A549 (cell line): ENCODE measurements at regions of chr9 and their contacts with region 1.

Region 1: DNA sequence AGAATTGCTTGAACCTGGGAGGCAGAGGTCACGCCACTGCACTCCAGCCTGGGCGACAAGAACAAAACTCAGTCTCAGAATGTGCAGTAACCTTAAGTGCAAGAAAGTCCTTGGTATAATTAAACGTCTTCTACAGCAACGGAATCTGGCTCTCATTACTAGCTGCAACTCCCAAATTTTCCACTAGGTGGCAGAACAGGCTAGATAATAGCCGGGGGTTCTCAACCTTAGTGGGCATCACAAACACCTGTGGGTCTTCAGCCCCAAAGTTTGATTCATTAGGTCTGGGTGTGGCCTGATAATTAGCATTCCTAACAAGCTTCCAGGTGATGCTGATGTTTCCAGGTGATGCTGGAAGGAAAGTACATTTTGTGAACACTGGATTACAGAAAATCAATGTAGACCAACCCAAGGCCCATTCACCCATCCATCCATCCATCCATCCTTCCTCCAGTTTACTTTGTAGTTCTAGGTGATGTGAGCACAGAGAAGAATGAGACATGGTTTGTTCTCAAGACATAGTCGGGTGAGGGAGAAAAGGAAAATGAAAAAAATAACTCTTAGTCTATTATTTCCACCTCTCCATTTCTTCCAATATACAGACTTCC is 37.3 kb downstream of the FBXW2 start:
- DNase-seq: peak; percentile 47 to 68
- ATAC-seq: peak; percentile 83 to 87; a peak in 5 of 6 replicates
- H3K4me3 ChIP-seq: no peak overlapping the region
- H3K27ac ChIP-seq: 0 out of 6 replicates have a peak overlapping the region, but pooled peaks of 1 of the 2 experiments have one; percentile 46
- H3K4me1 ChIP-seq: peaks cover 3% of the 10 kb centered on the region; the same call in 1 of the 3 replicates
- CTCF ChIP-seq: peak; percentile 93
- EP300 ChIP-seq: no peak
- POLR2A ChIP-seq: no peak
- RAD21 ChIP-seq: peak; percentile 92 to 96

Region 2: GRCh38 chr9:120714088-120714845 is 41.7 kb before region 1 on chr9 and contains the start of gene MEGF9:
- CTCF ChIA-PET with region 1: interaction called, 17 read pairs
- POLR2A ChIA-PET with region 1: no interaction called
- DNase-seq: peak; percentile 94 to 97
- ATAC-seq: peak; percentile 87 to 96
- H3K4me3 ChIP-seq: peak within 1 kb of the TSS; percentile 86
- H3K27ac ChIP-seq: peak within 1 kb of the TSS; percentile 95 to 96
- H3K4me1 ChIP-seq: peaks cover 24% of the 10 kb centered on the region
- CTCF ChIP-seq: no peak; the same call in 2 of the 3 replicates
- EP300 ChIP-seq: no peak
- POLR2A ChIP-seq: peak; percentile 59
- RAD21 ChIP-seq: no peak
- polyA plus RNA-seq, gene MEGF9: 25.7 and 32.8 TPM in 2 replicates

Region 3: GRCh38 chr9:120742951-120743416 is 12.9 kb before region 1 on chr9:
- CTCF ChIA-PET with region 1: interaction called, 19 read pairs
- POLR2A ChIA-PET with region 1: no interaction called
- DNase-seq: peak; percentile 71
- ATAC-seq: peak; percentile 86 to 95
- H3K4me3 ChIP-seq: no peak overlapping the region
- H3K27ac ChIP-seq: no peak overlapping the region
- H3K4me1 ChIP-seq: peaks cover 9% of the 10 kb centered on the region; the same call in 1 of the 3 replicates
- CTCF ChIP-seq: peak; percentile 62
- EP300 ChIP-seq: no peak
- POLR2A ChIP-seq: no peak
- RAD21 ChIP-seq: peak; percentile 66 to 81

Region 4: DNA sequence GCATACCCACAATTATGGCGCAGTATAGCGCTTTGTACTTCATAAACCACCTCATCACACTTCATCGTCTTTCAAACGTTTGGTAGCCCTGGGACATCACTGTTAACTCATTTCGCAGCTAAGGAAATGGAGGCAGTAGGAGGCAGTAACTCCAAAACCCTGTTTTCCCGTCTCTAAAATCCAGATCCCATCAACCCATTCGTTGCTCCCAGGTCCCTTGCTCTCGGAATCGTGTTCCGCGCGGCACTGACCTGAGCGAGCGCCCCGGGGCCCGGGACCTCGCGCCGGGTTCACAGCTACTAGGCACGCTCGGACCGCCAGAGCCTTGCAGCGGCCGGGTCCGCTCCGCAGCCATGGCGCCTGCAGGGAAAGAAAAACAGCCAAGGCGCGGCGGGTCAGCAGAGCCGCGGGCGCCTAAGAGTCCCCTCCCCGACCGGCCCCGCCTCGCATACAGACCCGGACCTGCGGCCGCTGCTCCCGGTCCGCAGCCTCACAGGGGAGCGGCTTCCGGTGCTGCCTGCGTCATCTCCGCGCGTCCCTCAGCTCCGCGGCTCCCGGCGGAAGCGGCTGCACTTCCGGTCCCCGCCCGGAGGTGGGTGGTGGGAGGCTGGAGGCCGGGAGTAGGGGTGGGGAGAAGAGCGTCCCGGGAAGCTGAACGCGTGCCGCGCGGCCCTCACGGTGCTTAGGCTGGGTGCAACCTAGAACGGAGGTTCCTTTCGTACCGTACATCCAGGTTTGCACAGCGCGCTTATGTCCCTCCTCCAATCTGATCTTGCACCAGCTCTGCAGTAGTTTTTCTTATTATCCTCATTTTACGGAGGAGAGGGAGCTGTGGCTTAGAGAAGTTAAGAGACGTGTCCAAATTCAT is 37.2 kb after region 1 on chr9 and contains the start of gene FBXW2:
- CTCF ChIA-PET with region 1: interaction called, 14 read pairs
- POLR2A ChIA-PET with region 1: no interaction called
- DNase-seq: peak; percentile 90 to 92
- ATAC-seq: peak; percentile 99
- H3K4me3 ChIP-seq: peak within 1 kb of the TSS; percentile 67
- H3K27ac ChIP-seq: peak within 1 kb of the TSS; percentile 89 to 97
- H3K4me1 ChIP-seq: peaks cover 16% of the 10 kb centered on the region
- CTCF ChIP-seq: no peak
- EP300 ChIP-seq: no peak
- POLR2A ChIP-seq: peak; percentile 96
- RAD21 ChIP-seq: no peak; a peak in 2 of 5 replicates
- polyA plus RNA-seq, gene FBXW2: 56.0 and 60.0 TPM in 2 replicates

Region 5: GRCh38 chr9:120936011-120936763 is 180.3 kb after region 1 on chr9:
- CTCF ChIA-PET with region 1: interaction called, 60 read pairs
- POLR2A ChIA-PET with region 1: no interaction called
- DNase-seq: peak; percentile 89 to 96
- ATAC-seq: peak; percentile 88 to 93
- H3K4me3 ChIP-seq: no peak overlapping the region
- H3K27ac ChIP-seq: peak overlapping the region; percentile 83 to 85
- H3K4me1 ChIP-seq: peaks cover 45% of the 10 kb centered on the region
- CTCF ChIP-seq: peak; percentile 95
- EP300 ChIP-seq: no peak
- POLR2A ChIP-seq: no peak
- RAD21 ChIP-seq: peak; percentile 89

Region 6: GRCh38 chr9:121059998-121060636 is 304.2 kb after region 1 on chr9:
- CTCF ChIA-PET with region 1: interaction called, 11 read pairs
- POLR2A ChIA-PET with region 1: interaction called, 3 read pairs
- DNase-seq: peak; percentile 71 to 81
- ATAC-seq: peak; percentile 74 to 75; a peak in 3 of 6 replicates
- H3K4me3 ChIP-seq: no peak overlapping the region
- H3K27ac ChIP-seq: peak overlapping the region; percentile 40 to 57; a peak in 5 of 6 replicates
- H3K4me1 ChIP-seq: peaks cover 33% of the 10 kb centered on the region
- CTCF ChIP-seq: peak; percentile 90
- EP300 ChIP-seq: no peak
- POLR2A ChIP-seq: no peak
- RAD21 ChIP-seq: peak; percentile 72 to 74